ENCODE measurements at regions of chr7 and their contacts with region 1.

Region 1: GRCh38 chr7:157250605-157251228 is 86.1 kb upstream of the DNAJB6 start:
- DNase-seq: no peak
- ATAC-seq: peak in 1 of 2 donors; percentile 74
- H3K4me3 ChIP-seq: no peak overlapping the region
- H3K27ac ChIP-seq: no peak overlapping the region
- H3K4me1 ChIP-seq: no peaks in the 10 kb centered on the region
- H3K27me3 ChIP-seq: no peaks in the 10 kb centered on the region
- CTCF ChIP-seq: peak; percentile 39 to 75 (median 53)
- POLR2A ChIP-seq: no peak

Region 2: GRCh38 chr7:157150882-157151281 is 99.8 kb before region 1 on chr7:
- in situ Hi-C with region 1: loop called in 1 of 4 experiments (anchors 10 kb)
- intact Hi-C with region 1: loop called (anchors 5 kb)
- DNase-seq: peak; percentile 36 to 82
- ATAC-seq: peak; percentile 86
- H3K4me3 ChIP-seq: peak overlapping the region; percentile 7 to 20 (median 14)
- H3K27ac ChIP-seq: peak overlapping the region; percentile 55 to 83 (median 74)
- H3K4me1 ChIP-seq: peaks cover 67 to 68% of the 10 kb centered on the region in 2 donors
- H3K27me3 ChIP-seq: no peaks in the 10 kb centered on the region
- CTCF ChIP-seq: no peak
- POLR2A ChIP-seq: no peak

Region 3: DNA sequence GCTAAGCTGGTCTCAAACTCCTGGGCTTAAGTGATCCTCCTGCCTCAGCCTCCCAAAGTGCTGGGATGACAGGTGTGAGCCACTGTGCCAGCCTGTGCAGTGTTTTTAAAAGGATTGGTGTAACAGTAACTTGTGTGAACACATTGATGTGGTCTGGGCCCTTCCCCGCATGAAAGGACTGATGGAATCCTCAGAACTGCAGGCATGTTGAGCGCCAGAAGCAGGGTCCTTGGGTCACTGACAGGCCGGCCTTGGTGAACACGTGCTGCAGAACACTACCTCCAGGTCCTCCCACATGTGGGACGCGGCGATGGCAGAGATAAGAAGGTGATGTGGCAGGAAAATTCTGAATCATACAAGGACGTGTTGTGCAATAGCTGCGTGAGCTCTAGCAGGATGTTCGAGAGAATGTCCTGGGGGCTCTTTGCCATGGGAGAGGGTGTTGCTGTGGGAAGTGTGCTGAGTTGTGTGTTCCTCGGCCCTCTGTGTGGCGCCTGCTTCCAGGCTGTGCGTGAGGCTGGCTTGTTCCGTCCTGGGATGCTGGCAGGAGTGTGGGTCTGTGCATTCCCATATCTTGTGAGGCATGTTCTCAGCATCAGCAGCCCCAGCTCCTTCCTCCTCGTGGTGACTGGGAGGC is 154.2 kb after region 1 on chr7:
- in situ Hi-C with region 1: loop called in 1 of 4 experiments (anchors 25 kb)
- intact Hi-C with region 1: loop called (anchors 5 kb)
- DNase-seq: peak in 1 of 2 donors; percentile 59
- ATAC-seq: peak; percentile 34 to 47
- H3K4me3 ChIP-seq: no peak overlapping the region
- H3K27ac ChIP-seq: peak overlapping the region; percentile 64 to 81 (median 77)
- H3K4me1 ChIP-seq: peaks cover 23 to 37% of the 10 kb centered on the region in 2 donors
- H3K27me3 ChIP-seq: no peaks in the 10 kb centered on the region
- CTCF ChIP-seq: no peak
- POLR2A ChIP-seq: no peak

Measured in gastrocnemius medialis (tissue), 4 donors.